Sigmoid colon (tissue), 7 donors: ENCODE measurements at regions of chr12 and their contacts with region 1.

Region 1: GRCh38 chr12:95336390-95337067 is 118.9 kb downstream of the VEZT start:
- DNase-seq: peak; percentile 89
- H3K4me3 ChIP-seq: peak overlapping the region in 2 of 4 donors; percentile 8 to 24
- H3K27ac ChIP-seq: peak overlapping the region; percentile 81 to 87 (median 84)
- H3K4me1 ChIP-seq: peaks cover 0 to 40% (median 27%) of the 10 kb centered on the region in 4 donors
- H3K27me3 ChIP-seq: no peaks in the 10 kb centered on the region
- CTCF ChIP-seq: peak; percentile 45 to 76 (median 61)
- EP300 ChIP-seq: no peak
- POLR2A ChIP-seq: no peak

Region 2: DNA sequence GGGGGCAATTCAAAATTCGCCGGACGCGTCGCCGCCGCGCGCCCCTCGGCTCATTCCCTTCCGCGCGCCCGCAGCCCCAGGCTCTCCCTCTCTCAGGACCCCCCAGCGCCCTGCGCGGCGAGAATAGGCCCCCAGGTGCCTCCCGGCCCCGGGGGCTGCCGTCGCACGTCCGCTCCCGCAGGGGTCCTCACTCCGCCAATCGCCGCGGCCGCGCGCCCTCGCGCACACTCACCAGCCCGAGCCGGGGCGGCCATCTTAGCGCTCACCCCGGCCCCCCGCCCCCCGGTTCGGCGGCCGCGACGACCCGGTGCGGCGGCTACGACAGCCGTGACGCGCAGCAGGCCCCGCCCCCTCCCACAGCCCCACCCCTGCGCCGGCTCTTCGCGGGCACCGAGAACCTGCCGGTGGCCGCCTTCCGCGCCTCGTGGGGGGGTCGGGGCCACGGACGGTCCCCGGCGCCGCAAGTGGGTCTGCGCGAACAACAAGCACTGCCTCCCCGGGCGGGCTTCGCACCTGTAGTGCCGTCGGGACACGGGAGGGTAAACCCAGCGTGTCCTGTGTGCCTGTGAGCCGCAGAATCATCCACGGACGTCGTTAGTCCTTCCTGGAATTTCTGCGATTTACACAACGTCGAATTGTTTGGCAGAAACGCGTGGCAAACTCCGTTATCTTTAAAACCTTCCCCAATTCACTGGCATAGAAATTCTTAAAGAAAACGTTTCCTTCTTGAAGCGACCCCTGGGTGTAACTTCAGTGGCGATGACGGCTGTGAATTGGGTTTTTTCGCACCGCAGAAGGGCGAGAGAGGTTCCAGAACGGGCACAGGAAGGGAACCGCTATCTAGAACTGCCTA is 212.2 kb after region 1 on chr12:
- intact Hi-C with region 1: loop called (anchors 5 kb)
- DNase-seq: peak; percentile 83
- H3K4me3 ChIP-seq: peak overlapping the region; percentile 83 to 98 (median 90)
- H3K27ac ChIP-seq: peak overlapping the region; percentile 80 to 85 (median 81)
- H3K4me1 ChIP-seq: peaks cover 0 to 13% (median 7%) of the 10 kb centered on the region in 4 donors
- H3K27me3 ChIP-seq: no peaks in the 10 kb centered on the region
- CTCF ChIP-seq: no peak
- EP300 ChIP-seq: no peak
- POLR2A ChIP-seq: no peak